ENCODE measurements at regions of chr21 and their contacts with region 1.

Region 1: DNA sequence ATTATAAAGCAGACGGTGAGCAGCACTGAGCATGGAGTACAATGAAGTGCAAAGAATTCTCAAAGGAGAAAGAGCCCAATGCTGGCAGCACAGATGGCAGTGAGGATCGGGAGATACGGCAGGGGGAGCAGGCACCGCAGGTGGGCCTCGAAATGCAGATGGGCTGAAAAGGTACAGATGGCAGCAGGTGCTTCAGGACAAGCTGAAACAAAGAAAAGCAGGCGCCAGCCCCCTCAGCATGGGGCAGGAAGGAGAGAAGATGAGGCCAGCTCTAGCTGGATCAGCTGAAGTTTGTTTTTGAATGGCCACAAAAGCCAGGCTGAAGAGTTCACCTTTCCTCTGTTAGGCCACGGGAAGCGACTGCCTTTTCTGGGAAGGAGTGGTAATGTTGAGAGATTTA is 7.7 kb downstream of the CFAP298 start:
- DNase-seq: no peak
- ATAC-seq: no peak
- H3K4me3 ChIP-seq: no peak overlapping the region
- H3K27ac ChIP-seq: no peak overlapping the region
- H3K4me1 ChIP-seq: no peaks in the 10 kb centered on the region
- H3K27me3 ChIP-seq: no peaks in the 10 kb centered on the region
- CTCF ChIP-seq: no peak
- POLR2A ChIP-seq: no peak

Region 2: DNA sequence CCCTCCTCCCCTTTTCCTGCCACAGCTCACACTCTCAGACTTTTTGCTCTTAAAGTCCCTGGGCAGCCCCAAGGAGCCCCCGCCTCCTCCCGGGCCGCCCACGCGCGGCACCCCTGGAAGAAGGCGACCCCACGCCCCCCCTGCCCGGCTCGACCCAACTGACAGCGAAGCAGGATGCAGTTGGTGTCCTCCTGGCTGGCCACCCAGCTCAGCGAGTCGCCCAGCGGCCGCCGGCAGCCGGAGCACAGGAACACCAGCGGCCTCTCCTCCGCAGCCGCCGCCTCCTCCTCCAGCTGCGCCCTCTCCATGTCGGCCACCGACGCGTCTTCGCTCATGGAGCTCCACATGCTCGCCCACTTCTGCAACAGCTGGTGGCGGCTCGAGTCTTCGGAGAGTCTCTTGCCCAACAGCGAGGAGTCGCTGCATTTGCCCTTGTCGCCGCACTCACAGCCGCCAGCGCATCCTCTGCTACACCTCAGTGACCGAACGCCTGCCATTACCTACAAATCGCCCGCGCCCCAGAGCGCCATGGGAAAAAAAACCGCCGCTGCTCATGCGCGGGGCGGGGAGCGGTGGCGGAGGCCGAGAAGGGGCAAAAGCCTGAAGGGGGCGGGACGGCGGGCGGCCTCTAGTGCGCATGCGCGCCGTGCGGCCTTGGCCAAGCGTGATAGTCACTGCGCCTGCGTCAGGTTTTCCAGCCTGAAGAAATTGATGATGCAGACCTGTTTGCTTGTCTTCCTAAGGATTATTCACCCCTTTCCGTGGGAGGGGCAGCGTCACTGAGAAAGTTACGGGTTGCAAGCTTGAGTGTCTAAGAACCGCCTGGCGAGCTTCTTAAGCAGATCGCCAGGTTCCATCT is 325.7 kb before region 1 on chr21 and contains the start of gene MIS18A:
- intact Hi-C with region 1: loop called in 3 of 10 experiments (anchors 5 to 10 kb)
- DNase-seq: peak; percentile 95 to 98 (median 95)
- ATAC-seq: peak; percentile 95 to 98 (median 98)
- H3K4me3 ChIP-seq: peak within 1 kb of the TSS; percentile 70 to 99 (median 79)
- H3K27ac ChIP-seq: peak within 1 kb of the TSS in 10 of 12 donors; percentile 31 to 78 (median 62)
- H3K4me1 ChIP-seq: peaks cover 7 to 22% (median 17%) of the 10 kb centered on the region in 12 donors
- H3K27me3 ChIP-seq: no peaks in the 10 kb centered on the region
- CTCF ChIP-seq: peak in 4 of 12 donors; percentile 10 to 45 (median 21)
- POLR2A ChIP-seq: peak in 1 of 2 donors; percentile 51
- total RNA-seq, gene MIS18A: 1.4 to 4.1 (median 2.9) TPM

Region 3: GRCh38 chr21:32562426-32562825 is 42.0 kb before region 1 on chr21:
- intact Hi-C with region 1: no loop called
- DNase-seq: peak in 4 of 5 donors; percentile 58 to 62 (median 60)
- ATAC-seq: peak; percentile 55 to 84 (median 66)
- H3K4me3 ChIP-seq: no peak overlapping the region
- H3K27ac ChIP-seq: peak overlapping the region in 9 of 12 donors; percentile 5 to 70 (median 56)
- H3K4me1 ChIP-seq: peaks cover 0 to 11% (median 1%) of the 10 kb centered on the region in 12 donors
- H3K27me3 ChIP-seq: no peaks in the 10 kb centered on the region
- CTCF ChIP-seq: peak; percentile 37 to 81 (median 58)
- POLR2A ChIP-seq: no peak